ENCODE measurements at regions of chr5 and their contacts with region 1.

Region 1: DNA sequence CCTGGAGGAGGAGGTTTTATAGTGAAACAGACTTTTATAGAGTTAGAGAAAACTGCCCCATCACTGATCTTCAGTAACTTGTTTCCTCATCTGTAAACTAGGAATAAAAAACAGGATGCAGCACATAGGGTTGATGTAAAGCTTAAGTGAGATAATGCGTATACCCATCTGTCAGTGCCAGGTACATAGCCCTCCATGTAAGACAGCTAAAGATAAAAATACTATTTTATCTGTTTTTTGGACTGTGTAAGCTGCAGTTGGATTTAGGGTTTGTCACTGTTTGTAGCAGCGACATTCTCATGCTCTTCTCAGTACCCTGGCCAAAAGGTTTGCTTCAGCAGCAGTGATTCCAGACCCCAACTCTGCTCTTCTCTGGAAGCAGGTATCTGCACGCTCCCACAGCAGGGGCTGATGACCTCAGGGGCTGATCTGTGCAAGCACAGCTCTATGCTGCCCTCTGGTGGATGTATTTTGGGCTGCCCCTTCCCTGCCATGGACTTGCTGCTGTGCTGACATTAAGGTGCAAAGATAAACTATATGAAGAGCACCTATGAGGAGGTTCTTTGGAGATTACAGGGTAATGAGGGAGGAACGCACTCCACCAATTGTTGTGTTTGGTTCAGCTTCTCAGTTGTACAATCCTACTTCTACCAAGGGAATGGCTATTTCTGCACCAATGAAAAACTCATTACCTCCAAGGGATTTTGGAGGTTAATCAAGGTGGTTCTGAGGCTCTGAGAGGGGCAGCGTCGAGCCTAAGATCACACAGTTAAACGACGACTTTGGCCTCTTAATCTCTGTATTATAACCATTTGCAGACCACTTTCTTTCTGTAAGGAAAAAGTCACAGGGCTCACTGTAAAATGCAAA is 13.1 kb downstream of the HMHB1 start:
- DNase-seq: peak; percentile 81
- ATAC-seq: peak; percentile 87
- H3K4me3 ChIP-seq: no peak overlapping the region
- H3K27ac ChIP-seq: no peak overlapping the region
- H3K4me1 ChIP-seq: peaks cover 26% of the 10 kb centered on the region
- H3K27me3 ChIP-seq: no peaks in the 10 kb centered on the region
- CTCF ChIP-seq: peak; percentile 91 to 93 (median 93); a peak in 5 of 6 replicates
- EP300 ChIP-seq: no peak
- POLR2A ChIP-seq: no peak
- RAD21 ChIP-seq: peak; percentile 100

Region 2: GRCh38 chr5:143314659-143315058 is 510.4 kb before region 1 on chr5:
- CTCF ChIA-PET with region 1: interaction called, 4 read pairs
- POLR2A ChIA-PET with region 1: no interaction called
- RAD21 ChIA-PET with region 1: interaction called, 3 read pairs
- SMC1A ChIA-PET with region 1: interaction called, 4 read pairs
- in situ Hi-C with region 1: no loop called
- intact Hi-C with region 1: loop called (anchors 10 kb)
- DNase-seq: no peak
- ATAC-seq: peak; percentile 61
- H3K4me3 ChIP-seq: no peak overlapping the region
- H3K27ac ChIP-seq: 0 out of 2 replicates have a peak overlapping the region, but pooled peaks have one; percentile 7
- H3K4me1 ChIP-seq: peaks cover 16% of the 10 kb centered on the region; the same call in 1 of the 2 replicates
- H3K27me3 ChIP-seq: no peaks in the 10 kb centered on the region
- CTCF ChIP-seq: no peak
- EP300 ChIP-seq: no peak
- POLR2A ChIP-seq: no peak
- RAD21 ChIP-seq: no peak

Region 3: DNA sequence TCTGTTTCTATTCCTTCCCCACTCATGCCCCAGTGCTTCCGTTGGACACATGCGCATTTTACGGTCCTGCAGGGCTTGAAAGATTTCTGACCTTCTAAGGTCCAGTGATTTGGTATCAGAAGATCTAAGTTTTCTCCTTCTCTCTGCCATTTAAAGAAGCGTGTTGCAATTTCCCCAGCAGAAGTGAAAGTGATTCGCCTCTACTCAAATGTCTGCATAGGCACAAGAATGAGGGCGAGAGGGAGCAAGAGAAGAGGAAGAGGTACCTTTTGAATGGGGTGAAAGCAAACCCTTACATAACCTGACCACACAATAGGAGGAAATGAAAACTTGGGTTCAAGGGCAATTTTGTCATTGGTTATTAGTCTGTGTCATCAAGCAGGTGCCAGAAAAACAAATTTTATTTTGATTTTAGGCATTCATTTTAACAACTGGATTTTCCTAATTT is 389.9 kb before region 1 on chr5:
- CTCF ChIA-PET with region 1: interaction called, 10 read pairs
- POLR2A ChIA-PET with region 1: interaction called, 3 read pairs
- RAD21 ChIA-PET with region 1: interaction called, 34 read pairs
- SMC1A ChIA-PET with region 1: interaction called, 9 read pairs
- in situ Hi-C with region 1: no loop called
- intact Hi-C with region 1: loop called (anchors 2 kb)
- DNase-seq: peak; percentile 98
- ATAC-seq: peak; percentile 81
- H3K4me3 ChIP-seq: peak overlapping the region; percentile 49; the same call in 1 of the 2 replicates
- H3K27ac ChIP-seq: peak overlapping the region; percentile 89
- H3K4me1 ChIP-seq: peaks cover 16% of the 10 kb centered on the region
- H3K27me3 ChIP-seq: no peaks in the 10 kb centered on the region
- CTCF ChIP-seq: no peak
- EP300 ChIP-seq: peak; percentile 88 to 96
- POLR2A ChIP-seq: 0 out of 2 replicates have a peak, but pooled peaks have one; percentile 33
- RAD21 ChIP-seq: peak; percentile 42; the same call in 1 of the 2 replicates

Region 4: GRCh38 chr5:143592648-143593047 is 232.4 kb before region 1 on chr5:
- CTCF ChIA-PET with region 1: interaction called, 4 read pairs
- POLR2A ChIA-PET with region 1: no interaction called
- RAD21 ChIA-PET with region 1: interaction called, 3 read pairs
- SMC1A ChIA-PET with region 1: interaction called, 5 read pairs
- in situ Hi-C with region 1: loop called (anchors 10 kb)
- intact Hi-C with region 1: no loop called
- DNase-seq: no peak
- ATAC-seq: peak; percentile 81
- H3K4me3 ChIP-seq: no peak overlapping the region
- H3K27ac ChIP-seq: peak overlapping the region; percentile 57
- H3K4me1 ChIP-seq: peaks cover 33% of the 10 kb centered on the region
- H3K27me3 ChIP-seq: no peaks in the 10 kb centered on the region
- CTCF ChIP-seq: no peak
- EP300 ChIP-seq: peak; percentile 16 to 56; a peak in 1 of 4 replicates
- POLR2A ChIP-seq: no peak
- RAD21 ChIP-seq: no peak

Region 5: DNA sequence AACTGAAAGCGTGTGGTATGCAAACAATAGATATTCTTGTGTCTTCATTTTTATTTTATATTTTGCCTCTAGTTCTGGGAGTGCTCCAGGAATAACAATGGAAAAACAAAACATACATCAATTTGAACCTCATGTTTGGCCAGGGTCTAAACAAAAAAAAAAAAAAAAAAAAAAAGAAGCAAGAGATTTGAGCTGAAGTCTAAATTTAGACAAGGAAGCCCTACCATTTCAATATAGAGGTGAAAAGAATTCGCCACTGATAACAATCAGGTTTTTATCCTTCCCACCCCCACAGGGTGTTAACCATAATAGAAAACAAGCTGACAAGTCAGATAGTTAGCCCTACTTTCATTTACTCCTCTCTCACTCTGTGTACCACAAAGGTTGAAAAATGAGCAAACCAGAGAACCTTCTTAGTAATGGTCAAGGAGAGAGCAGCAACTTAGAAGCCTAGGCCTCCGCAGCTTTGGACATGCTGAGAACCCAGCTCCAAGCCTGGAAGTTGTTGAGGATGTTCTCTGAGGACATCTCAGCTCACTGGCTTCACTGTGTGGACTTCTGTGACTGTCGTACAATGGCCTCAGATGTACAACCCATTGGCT is 131.3 kb before region 1 on chr5:
- CTCF ChIA-PET with region 1: interaction called, 5 read pairs
- POLR2A ChIA-PET with region 1: interaction called, 4 read pairs
- RAD21 ChIA-PET with region 1: interaction called, 14 read pairs
- SMC1A ChIA-PET with region 1: interaction called, 7 read pairs
- in situ Hi-C with region 1: no loop called
- intact Hi-C with region 1: no loop called
- DNase-seq: peak; percentile 31
- ATAC-seq: peak; percentile 100
- H3K4me3 ChIP-seq: no peak overlapping the region
- H3K27ac ChIP-seq: no peak overlapping the region
- H3K4me1 ChIP-seq: peaks cover 7% of the 10 kb centered on the region
- H3K27me3 ChIP-seq: no peaks in the 10 kb centered on the region
- CTCF ChIP-seq: no peak
- EP300 ChIP-seq: peak; percentile 79 to 86
- POLR2A ChIP-seq: no peak
- RAD21 ChIP-seq: no peak

Region 6: DNA sequence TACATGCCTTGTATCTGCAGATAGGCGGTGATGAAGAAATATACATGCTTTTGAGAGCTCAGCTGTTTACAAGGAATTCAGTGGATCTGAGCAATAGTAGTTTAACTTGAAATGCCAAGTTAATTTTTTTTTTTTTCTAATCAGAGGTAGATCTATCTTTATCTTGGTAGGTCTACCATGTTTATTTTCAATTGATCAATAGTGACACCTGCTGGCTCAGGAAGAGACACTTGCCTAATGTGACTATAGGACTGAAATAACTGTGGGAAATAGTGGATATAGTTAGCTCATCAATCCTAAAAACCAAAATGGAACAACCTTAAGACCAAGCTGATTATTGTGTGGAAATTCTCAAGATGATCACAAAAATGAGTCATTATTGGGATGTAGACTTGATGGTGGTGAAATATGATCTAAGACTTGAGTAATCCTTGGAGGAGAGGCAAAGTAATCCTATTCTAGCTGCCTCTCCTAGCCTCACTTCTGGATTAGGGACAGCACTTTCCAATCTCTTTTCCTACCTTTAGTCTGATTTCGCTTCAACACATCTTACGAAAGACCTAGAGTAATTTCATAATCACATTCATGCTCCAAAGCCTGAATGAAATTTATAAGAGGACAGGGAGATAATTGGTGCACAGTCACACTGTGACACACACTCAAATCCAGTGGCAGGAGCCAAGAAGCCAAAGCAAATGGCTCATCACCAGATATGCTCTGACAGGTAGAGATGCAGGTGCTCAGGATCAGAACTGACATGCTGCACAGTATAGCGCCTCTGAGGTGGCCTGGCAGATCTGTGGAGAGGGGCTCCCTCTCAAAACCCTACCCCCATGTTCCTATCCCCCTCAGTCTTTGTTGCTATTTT is 143.2 kb after region 1 on chr5:
- CTCF ChIA-PET with region 1: interaction called, 15 read pairs
- POLR2A ChIA-PET with region 1: no interaction called
- RAD21 ChIA-PET with region 1: interaction called, 14 read pairs
- SMC1A ChIA-PET with region 1: interaction called, 34 read pairs
- in situ Hi-C with region 1: no loop called
- intact Hi-C with region 1: loop called (anchors 2 kb)
- DNase-seq: peak; percentile 34
- ATAC-seq: peak; percentile 86
- H3K4me3 ChIP-seq: no peak overlapping the region
- H3K27ac ChIP-seq: no peak overlapping the region
- H3K4me1 ChIP-seq: no peaks in the 10 kb centered on the region
- H3K27me3 ChIP-seq: no peaks in the 10 kb centered on the region; a peak in 1 of 4 replicates
- CTCF ChIP-seq: peak; percentile 46 to 63 (median 56); a peak in 5 of 6 replicates
- EP300 ChIP-seq: no peak
- POLR2A ChIP-seq: no peak
- RAD21 ChIP-seq: peak; percentile 69